Activated CD4-positive, alpha-beta T cell treated with anti-CD3 and anti-CD28 coated beads, Interleukin-2, amount 10 ng/mL, durations not matched to agents 24 days and 14 days (primary cell): ENCODE measurements at regions of chr11 and their contacts with region 1.

Region 1: DNA sequence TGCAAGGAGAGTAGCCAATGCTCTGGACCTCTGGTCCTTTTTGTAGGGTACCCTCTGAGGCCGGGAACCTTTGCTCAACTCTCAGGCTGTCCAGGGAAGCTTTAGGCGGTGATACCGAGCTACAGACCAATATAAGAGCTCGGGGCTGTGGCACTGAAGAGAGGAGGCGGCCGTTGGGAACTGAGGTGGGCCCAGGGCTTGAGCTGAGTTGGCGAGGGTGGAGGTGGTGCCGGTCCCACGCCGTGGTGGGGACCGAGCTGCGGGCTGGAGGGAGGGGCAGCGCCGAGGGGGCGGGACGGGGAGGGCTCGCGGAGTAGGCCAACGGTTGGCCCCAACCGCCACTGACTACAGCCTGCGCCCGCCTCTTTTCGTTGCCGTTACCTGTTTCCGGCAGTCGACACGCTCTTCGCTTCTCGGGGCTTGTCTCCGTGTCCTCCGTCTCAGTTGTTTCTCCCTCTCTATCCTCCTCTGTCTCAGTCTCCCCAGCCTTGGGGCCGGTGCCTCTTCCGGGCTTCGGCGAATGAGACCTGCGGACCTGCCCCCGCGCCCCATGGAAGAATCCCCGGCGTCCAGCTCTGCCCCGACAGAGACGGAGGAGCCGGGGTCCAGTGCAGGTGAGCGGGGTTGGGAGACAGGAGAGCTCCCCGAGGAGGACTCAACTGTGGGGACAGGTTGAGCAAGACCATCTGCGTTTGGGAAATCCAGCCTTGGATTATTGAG is at the start of gene NEU3:
- DNase-seq: peak; percentile 95
- H3K4me3 Mint-ChIP-seq: peak within 1 kb of the TSS; percentile 97
- H3K27ac Mint-ChIP-seq: peak within 1 kb of the TSS; percentile 87
- H3K4me1 Mint-ChIP-seq: peaks cover 27% of the 10 kb centered on the region
- H3K27me3 Mint-ChIP-seq: no peaks in the 10 kb centered on the region
- total RNA-seq, gene NEU3: 15.1 and 16.3 TPM in 2 replicates

Region 2: GRCh38 chr11:74870485-74870884 is 118.2 kb before region 1 on chr11:
- intact Hi-C with region 1: no loop called
- DNase-seq: peak; percentile 63
- H3K4me3 Mint-ChIP-seq: no peak overlapping the region
- H3K27ac Mint-ChIP-seq: no peak overlapping the region
- H3K4me1 Mint-ChIP-seq: no peaks in the 10 kb centered on the region
- H3K27me3 Mint-ChIP-seq: no peaks in the 10 kb centered on the region

Region 3: GRCh38 chr11:74948898-74949747 is 39.6 kb before region 1 on chr11 and contains the starts of genes SPCS2 and XRRA1:
- intact Hi-C with region 1: loop called (anchors 1 kb)
- DNase-seq: peak; percentile 99
- H3K4me3 Mint-ChIP-seq: peak within 1 kb of the TSS; percentile 91
- H3K27ac Mint-ChIP-seq: peak within 1 kb of the TSS; percentile 89
- H3K4me1 Mint-ChIP-seq: peaks cover 37% of the 10 kb centered on the region
- H3K27me3 Mint-ChIP-seq: no peaks in the 10 kb centered on the region
- total RNA-seq, gene SPCS2: 154 and 169 TPM in 2 replicates
- total RNA-seq, gene XRRA1: 11.0 and 11.4 TPM in 2 replicates